ENCODE measurements at regions of chr13 and their contacts with region 1.

Region 1: GRCh38 chr13:29508130-29508875 is 87.2 kb downstream of the SLC7A1 start:
- DNase-seq: peak; percentile 83 to 92
- H3K4me3 ChIP-seq: no peak overlapping the region
- H3K27ac ChIP-seq: no peak overlapping the region
- H3K4me1 ChIP-seq: peaks cover 0 to 5% (median 2%) of the 10 kb centered on the region in 4 donors
- H3K27me3 ChIP-seq: peaks cover 0 to 15% of the 10 kb centered on the region in 2 donors
- CTCF ChIP-seq: peak; percentile 93 to 97

Region 2: DNA sequence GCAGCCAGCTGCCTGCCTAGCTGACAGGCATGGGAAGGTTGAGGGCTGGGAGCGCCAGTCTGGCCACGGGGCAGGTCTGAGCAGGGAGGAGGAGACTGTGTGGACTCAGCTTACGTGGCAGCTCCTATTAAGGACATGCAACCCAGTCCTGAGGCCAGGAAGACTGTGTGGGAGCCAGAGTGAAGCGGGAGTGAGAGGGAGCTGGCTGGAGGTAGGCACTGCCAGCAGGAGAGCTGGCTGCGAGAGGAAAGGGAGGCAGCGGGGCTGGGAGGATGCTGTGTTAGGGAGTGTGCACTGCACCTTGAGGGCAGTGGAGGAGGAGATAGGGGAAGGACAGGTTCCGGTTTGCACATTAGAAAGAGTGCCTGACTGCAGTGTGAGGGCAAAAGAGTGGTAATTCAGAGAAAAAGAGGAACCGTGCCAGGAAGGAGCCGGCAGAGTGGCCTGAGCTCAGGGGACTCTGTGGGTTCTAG is 12.0 kb before region 1 on chr13:
- intact Hi-C with region 1: no loop called
- DNase-seq: no peak
- H3K4me3 ChIP-seq: no peak overlapping the region
- H3K27ac ChIP-seq: no peak overlapping the region
- H3K4me1 ChIP-seq: peaks cover 0 to 13% (median 7%) of the 10 kb centered on the region in 4 donors
- H3K27me3 ChIP-seq: peaks cover 0 to 4% of the 10 kb centered on the region in 2 donors
- CTCF ChIP-seq: no peak

Region 3: DNA sequence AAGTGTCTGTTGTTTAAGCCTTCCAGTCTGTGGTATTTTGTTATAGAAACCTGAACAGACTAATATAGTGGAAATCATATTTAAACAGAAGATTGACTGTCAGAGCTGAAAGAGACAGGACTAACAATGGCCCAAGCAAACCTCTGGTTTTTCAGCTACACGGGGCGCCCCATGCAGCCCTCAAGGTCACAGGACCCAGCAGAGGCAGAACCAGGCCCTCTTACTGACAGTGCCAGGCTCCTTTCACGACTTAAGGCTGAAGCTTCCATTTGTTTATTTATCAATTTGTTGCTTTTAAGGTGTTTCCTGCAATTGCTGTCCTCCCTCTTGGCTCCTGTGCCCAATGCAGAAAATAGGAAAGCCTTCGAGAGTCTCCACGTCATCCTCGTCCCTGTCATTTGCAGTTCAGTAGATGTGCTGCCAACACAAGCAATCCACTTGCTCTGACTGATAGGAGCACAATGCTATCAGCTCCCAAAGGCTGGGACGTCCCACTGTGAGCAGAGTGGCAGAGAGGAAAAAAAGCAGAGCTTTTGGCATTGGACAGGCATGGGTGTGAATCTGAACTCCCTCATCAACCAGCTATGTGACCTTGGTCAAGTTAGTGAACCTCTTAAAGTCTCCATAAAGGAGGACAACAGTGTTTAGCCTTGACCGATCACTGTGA is 97.7 kb after region 1 on chr13:
- intact Hi-C with region 1: no loop called
- DNase-seq: no peak
- H3K4me3 ChIP-seq: no peak overlapping the region
- H3K27ac ChIP-seq: no peak overlapping the region
- H3K4me1 ChIP-seq: no peaks in the 10 kb centered on the region
- H3K27me3 ChIP-seq: peaks cover 0 to 3% of the 10 kb centered on the region in 2 donors
- CTCF ChIP-seq: no peak

Region 4: DNA sequence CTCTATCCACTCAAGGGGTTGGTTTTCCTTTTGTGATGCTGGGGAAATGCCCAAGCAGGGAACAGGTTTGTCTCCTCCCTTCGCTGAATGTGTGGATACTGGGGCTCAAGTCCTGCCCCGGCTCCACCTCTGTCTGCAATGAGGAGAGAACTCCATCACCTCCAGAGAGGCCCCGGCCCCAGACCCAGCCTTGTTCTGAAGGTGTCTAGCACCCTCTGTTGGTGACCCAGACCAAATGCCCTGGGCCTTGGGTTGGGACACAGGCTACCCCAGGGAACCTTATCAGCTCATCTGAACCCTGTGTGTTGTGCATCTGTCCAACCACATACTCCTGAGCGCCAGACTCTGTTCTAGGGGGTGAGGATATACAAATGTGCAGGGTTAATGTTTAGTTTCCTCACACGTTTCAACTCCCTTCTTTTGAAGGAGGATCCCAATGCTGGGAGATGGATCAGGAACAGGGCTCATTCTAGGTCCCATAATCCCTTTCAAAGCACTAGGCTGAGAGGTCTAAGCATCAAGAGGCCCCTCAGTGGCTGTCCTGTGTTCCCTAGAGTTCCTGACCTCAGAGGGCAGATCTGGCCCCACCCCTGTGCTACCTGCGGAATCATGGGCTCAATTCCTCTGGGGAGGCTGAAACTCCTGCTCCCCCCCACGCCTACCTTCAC is 199.7 kb after region 1 on chr13:
- intact Hi-C with region 1: loop called (anchors 5 kb)
- DNase-seq: no peak
- H3K4me3 ChIP-seq: no peak overlapping the region
- H3K27ac ChIP-seq: no peak overlapping the region
- H3K4me1 ChIP-seq: peaks cover 0 to 3% (median under 1%) of the 10 kb centered on the region in 4 donors
- H3K27me3 ChIP-seq: no peaks in the 10 kb centered on the region
- CTCF ChIP-seq: peak; percentile 37 to 42